Activated CD4-positive, alpha-beta memory T cell treated with anti-CD3 and anti-CD28 coated beads for 36 hours (primary cell): ENCODE measurements at regions of chr15 and their contacts with region 1.

Region 1: GRCh38 chr15:74053941-74054529 is 28.3 kb downstream of the GOLGA6A start:
- DNase-seq: peak; percentile 83
- H3K4me3 Mint-ChIP-seq: no peak overlapping the region
- H3K27ac Mint-ChIP-seq: no peak overlapping the region
- H3K4me1 Mint-ChIP-seq: peaks cover 5% of the 10 kb centered on the region
- H3K27me3 Mint-ChIP-seq: no peaks in the 10 kb centered on the region

Region 2: DNA sequence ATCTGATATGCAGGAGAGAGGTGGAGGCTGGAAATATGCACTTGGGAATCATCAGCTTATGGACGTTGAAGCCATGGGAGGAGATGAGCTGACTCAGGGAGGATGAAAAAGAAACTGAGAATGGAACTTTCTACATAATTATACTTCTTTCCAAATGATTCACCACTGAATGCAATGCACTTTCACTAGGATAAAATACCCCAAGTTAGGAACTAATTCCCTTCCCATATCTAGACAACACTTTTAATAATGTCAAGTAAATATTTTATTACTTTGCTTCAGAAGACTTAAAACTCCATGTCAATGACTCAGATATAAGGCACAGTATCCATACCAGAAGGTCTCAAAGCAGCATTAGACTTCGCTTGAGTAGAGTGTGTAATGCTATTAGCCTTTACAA is 445.1 kb before region 1 on chr15:
- CTCF ChIA-PET with region 1: no interaction called
- POLR2A ChIA-PET with region 1: no interaction called
- intact Hi-C with region 1: no loop called
- DNase-seq: no peak
- H3K4me3 Mint-ChIP-seq: no peak overlapping the region
- H3K27ac Mint-ChIP-seq: no peak overlapping the region
- H3K4me1 Mint-ChIP-seq: peaks cover 46% of the 10 kb centered on the region
- H3K27me3 Mint-ChIP-seq: no peaks in the 10 kb centered on the region

Region 3: GRCh38 chr15:73991726-73992593 is 62.1 kb before region 1 on chr15 and contains the start of gene STOML1:
- CTCF ChIA-PET with region 1: interaction called, 21 read pairs
- POLR2A ChIA-PET with region 1: no interaction called
- intact Hi-C with region 1: no loop called
- DNase-seq: peak; percentile 97
- H3K4me3 Mint-ChIP-seq: peak within 1 kb of the TSS; percentile 80
- H3K27ac Mint-ChIP-seq: peak within 1 kb of the TSS; percentile 70
- H3K4me1 Mint-ChIP-seq: peaks cover 30% of the 10 kb centered on the region
- H3K27me3 Mint-ChIP-seq: no peaks in the 10 kb centered on the region
- total RNA-seq, gene STOML1: 7.1 to 10.1 TPM

Region 4: GRCh38 chr15:74036271-74037170 is 17.5 kb before region 1 on chr15:
- CTCF ChIA-PET with region 1: interaction called, 31 read pairs
- POLR2A ChIA-PET with region 1: no interaction called
- intact Hi-C with region 1: no loop called
- DNase-seq: no peak
- H3K4me3 Mint-ChIP-seq: no peak overlapping the region
- H3K27ac Mint-ChIP-seq: no peak overlapping the region
- H3K4me1 Mint-ChIP-seq: no peaks in the 10 kb centered on the region
- H3K27me3 Mint-ChIP-seq: no peaks in the 10 kb centered on the region

Region 5: GRCh38 chr15:74322181-74323076 is 268.4 kb after region 1 on chr15:
- CTCF ChIA-PET with region 1: interaction called, 10 read pairs
- POLR2A ChIA-PET with region 1: no interaction called
- intact Hi-C with region 1: loop called (anchors 5 kb)
- DNase-seq: peak; percentile 70
- H3K4me3 Mint-ChIP-seq: no peak overlapping the region
- H3K27ac Mint-ChIP-seq: no peak overlapping the region
- H3K4me1 Mint-ChIP-seq: no peaks in the 10 kb centered on the region
- H3K27me3 Mint-ChIP-seq: no peaks in the 10 kb centered on the region